ENCODE measurements at regions of chr11 and their contacts with region 1.

Region 1: GRCh38 chr11:61516675-61517572 is 8.4 kb downstream of the LRRC10B start:
- DNase-seq: peak; percentile 6 to 39 (median 14)
- H3K4me3 ChIP-seq: peak overlapping the region in 1 of 3 experiments; percentile 5
- H3K4me3 Mint-ChIP-seq: peak overlapping the region in 1 of 2 donors; percentile 68
- H3K27ac ChIP-seq: no peak overlapping the region
- H3K27ac Mint-ChIP-seq: no peak overlapping the region
- H3K4me1 ChIP-seq: peaks cover 6 to 10% of the 10 kb centered on the region in 2 donors
- H3K4me1 Mint-ChIP-seq: peaks cover 5% of the 10 kb centered on the region
- H3K27me3 ChIP-seq: peaks cover 0 to 3% of the 10 kb centered on the region in 2 donors
- H3K27me3 Mint-ChIP-seq: peaks cover 11 to 31% (median 16%) of the 10 kb centered on the region in 3 donors
- CTCF ChIP-seq: peak; percentile 97

Region 2: GRCh38 chr11:61384271-61385242 is 132.4 kb before region 1 on chr11:
- intact Hi-C with region 1: no loop called
- DNase-seq: peak in 1 of 3 donors; percentile 20
- H3K4me3 ChIP-seq: no peak overlapping the region
- H3K4me3 Mint-ChIP-seq: no peak overlapping the region
- H3K27ac ChIP-seq: no peak overlapping the region
- H3K27ac Mint-ChIP-seq: peak overlapping the region in 2 of 7 donors; percentile 36 to 80
- H3K4me1 ChIP-seq: peaks cover 27 to 31% of the 10 kb centered on the region in 2 donors
- H3K4me1 Mint-ChIP-seq: peaks cover 28% of the 10 kb centered on the region
- H3K27me3 ChIP-seq: no peaks in the 10 kb centered on the region
- H3K27me3 Mint-ChIP-seq: peaks cover 2 to 9% (median 3%) of the 10 kb centered on the region in 3 donors
- CTCF ChIP-seq: no peak

Region 3: DNA sequence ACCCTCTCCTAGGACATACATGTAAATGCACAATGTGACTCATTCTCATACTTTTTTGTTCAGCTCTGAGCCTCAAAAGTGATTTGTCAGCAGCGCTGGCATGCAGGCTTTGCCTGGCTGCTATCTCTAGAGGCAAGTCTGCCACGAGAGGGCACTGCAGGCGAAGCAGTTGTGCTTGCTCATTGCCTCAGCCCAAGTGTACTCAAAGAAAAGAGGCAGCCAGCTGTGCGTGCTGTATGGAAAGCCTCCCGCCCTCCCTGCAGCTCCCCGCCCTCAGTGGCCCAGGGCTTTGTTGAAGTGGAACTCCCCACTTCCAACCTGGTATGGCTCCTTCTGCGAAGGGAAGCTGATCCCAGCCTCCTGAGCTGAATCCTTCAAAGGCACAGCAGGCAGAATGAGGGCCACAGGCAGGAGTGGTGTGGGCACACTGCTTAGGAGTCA is 70.7 kb before region 1 on chr11:
- intact Hi-C with region 1: loop called in 1 of 2 experiments (anchors 2 kb)
- DNase-seq: peak; percentile 43 to 67 (median 64)
- H3K4me3 ChIP-seq: no peak overlapping the region
- H3K4me3 Mint-ChIP-seq: no peak overlapping the region
- H3K27ac ChIP-seq: peak overlapping the region in 1 of 2 donors; percentile 51
- H3K27ac Mint-ChIP-seq: peak overlapping the region in 1 of 7 donors; percentile 59
- H3K4me1 ChIP-seq: no peaks in the 10 kb centered on the region
- H3K4me1 Mint-ChIP-seq: peaks cover 3% of the 10 kb centered on the region
- H3K27me3 ChIP-seq: no peaks in the 10 kb centered on the region
- H3K27me3 Mint-ChIP-seq: no peaks in the 10 kb centered on the region
- CTCF ChIP-seq: peak; percentile 80

Measured in CD14-positive monocyte (primary cell).